ENCODE measurements at regions of chr6 and their contacts with region 1.

Region 1: DNA sequence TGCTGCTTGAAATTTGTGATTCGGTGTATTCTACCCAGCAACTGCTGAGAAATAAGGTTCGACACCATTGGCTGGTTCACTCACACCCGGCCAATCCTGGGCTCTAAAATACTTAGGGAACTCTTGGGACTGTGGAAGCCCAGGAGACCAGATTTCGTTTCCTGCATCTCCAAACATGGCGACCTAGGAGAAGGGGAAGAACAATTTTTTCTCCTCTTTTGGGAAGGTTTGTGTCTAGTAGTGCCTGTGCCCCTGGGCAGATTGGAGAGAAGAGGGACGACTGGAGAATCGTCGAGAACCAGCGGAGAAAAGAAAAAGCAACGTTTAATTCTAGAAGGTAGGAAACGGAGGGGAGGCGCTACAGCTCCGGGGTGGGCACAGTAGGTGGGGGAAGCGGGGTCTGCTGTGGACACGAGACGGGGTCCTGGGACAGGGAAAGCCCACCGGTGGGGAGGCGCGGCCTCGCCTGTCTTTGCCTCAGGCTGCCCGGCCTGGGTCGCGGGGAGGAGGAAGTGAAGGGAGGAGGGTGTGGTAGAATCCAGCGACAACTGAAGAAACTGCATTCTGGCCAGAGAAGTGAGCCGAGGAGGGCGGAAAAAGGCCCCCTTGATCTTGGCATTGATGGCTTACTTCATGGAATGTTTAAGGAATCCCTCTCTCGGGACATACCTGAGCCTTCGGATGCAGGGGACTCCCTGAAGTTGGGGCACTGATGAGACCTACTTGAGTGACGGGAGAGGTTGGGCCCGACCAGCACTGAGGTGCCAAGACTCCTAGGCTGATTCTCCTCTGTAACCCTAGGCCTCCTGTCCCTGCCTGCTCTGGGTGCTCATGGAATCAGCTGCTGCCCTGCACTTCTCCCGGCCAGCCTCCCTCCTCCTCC is at the start of gene BTN2A1:
- DNase-seq: peak in 1 of 2 donors; percentile 92
- H3K4me3 ChIP-seq: peak within 1 kb of the TSS; percentile 72 to 92
- H3K27ac ChIP-seq: peak within 1 kb of the TSS; percentile 96
- H3K4me1 ChIP-seq: peaks cover 47% of the 10 kb centered on the region
- H3K27me3 ChIP-seq: no peaks in the 10 kb centered on the region
- CTCF ChIP-seq: no peak
- POLR2A ChIP-seq: no peak
- total RNA-seq, gene BTN2A1: 18.4 TPM

Region 2: DNA sequence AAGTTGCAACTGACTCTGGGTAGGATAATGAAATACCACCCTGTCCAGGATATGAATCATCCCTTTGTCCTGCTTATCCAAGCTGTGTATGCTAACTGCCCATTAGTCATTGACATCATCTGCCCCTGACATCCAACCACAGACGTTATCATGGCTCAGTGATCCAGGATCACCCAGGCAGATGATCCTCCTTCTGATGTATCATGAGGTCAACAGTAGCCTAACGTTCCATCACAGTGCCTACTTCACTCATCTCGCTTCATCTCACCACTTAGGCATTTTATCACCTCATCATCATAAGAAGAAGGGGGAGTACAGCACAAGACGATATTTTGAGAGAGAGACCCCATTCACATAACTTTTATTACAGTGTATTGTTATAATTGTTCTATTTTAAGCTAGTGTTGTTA is 106.5 kb before region 1 on chr6:
- intact Hi-C with region 1: no loop called
- DNase-seq: no peak
- H3K4me3 ChIP-seq: no peak overlapping the region
- H3K27ac ChIP-seq: no peak overlapping the region
- H3K4me1 ChIP-seq: no peaks in the 10 kb centered on the region
- H3K27me3 ChIP-seq: no peaks in the 10 kb centered on the region
- CTCF ChIP-seq: no peak
- POLR2A ChIP-seq: no peak

Region 3: GRCh38 chr6:26363882-26364701 is 94.0 kb before region 1 on chr6:
- intact Hi-C with region 1: loop called (anchors 5 kb)
- DNase-seq: no peak
- H3K4me3 ChIP-seq: peak overlapping the region; percentile 63 to 71
- H3K27ac ChIP-seq: peak overlapping the region; percentile 95
- H3K4me1 ChIP-seq: peaks cover 27% of the 10 kb centered on the region
- H3K27me3 ChIP-seq: no peaks in the 10 kb centered on the region
- CTCF ChIP-seq: no peak
- POLR2A ChIP-seq: no peak

Region 4: DNA sequence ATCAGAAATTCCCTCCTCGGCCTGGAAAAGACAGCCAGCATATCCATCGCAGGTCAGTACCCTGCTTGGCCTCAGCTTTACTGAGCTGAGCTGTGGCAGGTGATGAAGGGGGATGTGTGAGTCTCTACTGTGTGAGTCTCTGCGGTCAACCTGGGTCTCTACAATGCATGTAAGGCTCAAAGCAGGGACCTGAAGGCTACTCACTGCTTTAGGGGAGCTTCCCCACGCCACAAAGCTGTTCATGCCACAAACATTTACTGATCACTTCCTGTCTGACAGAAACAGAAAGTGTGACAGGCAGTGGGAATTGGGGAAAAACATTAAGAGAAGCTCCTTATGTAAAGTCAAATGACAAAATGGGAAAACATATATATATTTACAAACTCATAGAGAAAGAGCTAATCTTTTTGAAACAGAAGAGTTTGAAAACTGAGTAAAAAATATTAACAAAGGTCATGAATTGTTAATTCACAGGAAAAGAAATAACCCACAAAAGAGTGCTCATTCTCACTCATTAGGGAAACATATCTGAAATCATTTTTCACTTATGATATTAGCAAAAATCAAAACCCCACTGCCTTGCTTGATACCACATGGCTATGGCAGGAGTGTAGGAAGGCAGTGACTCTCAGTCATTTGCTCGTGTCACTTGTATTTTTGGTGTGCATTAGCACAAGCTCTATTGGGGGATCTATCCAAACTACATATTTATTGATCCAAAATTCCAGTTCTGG is 11.9 kb before region 1 on chr6:
- intact Hi-C with region 1: no loop called
- DNase-seq: no peak
- H3K4me3 ChIP-seq: no peak overlapping the region
- H3K27ac ChIP-seq: no peak overlapping the region
- H3K4me1 ChIP-seq: peaks cover 15% of the 10 kb centered on the region
- H3K27me3 ChIP-seq: no peaks in the 10 kb centered on the region
- CTCF ChIP-seq: no peak
- POLR2A ChIP-seq: no peak

Measured in vagina (tissue), 2 donors.